Mammary epithelial cell (primary cell): ENCODE measurements at regions of chr3 and their contacts with region 1.

Region 1: DNA sequence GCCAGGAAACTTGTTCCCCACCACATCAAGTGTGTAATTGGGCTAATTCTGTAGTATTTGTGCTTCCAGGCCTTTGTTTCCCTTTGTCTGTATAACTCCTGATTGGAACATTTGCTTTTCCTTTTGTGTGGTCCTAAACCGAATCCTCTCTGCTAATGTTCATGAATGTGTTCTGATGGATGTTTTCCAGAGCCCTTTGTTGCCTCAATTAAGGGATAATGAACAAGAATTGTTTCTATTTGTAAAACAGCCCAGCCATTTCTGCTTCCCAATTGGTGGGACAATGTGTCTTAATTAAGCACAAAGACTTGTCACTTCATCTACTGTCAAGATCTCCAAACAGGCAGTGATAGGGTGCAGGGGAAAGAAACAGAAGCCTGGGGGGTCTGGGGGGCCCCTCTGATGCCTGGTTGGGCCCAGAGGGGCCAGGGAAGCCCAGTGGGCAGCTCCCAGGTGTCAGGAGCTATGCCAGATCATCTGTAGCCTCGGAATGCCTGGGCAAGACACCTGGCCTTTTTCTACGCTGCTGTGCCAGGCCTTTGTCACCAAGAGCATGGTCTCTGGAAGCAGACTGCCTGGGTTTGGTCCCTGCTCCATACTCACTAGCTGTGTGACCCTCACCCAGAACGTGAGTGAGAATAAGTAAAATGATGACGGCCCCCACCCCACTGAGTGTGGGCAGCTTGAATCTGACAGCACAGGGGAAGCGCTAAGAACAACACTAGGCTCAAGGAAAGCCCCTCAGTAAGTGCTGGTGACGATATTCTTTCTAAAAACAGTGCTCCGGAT is 116.6 kb upstream of the PRR20G start:
- DNase-seq: no peak
- H3K4me3 ChIP-seq: no peak overlapping the region
- H3K27ac ChIP-seq: no peak overlapping the region
- H3K4me1 ChIP-seq: no peaks in the 10 kb centered on the region
- H3K27me3 ChIP-seq: no peaks in the 10 kb centered on the region
- CTCF ChIP-seq: no peak

Region 2: GRCh38 chr3:127467391-127467790 is 63.0 kb after region 1 on chr3:
- CTCF ChIA-PET with region 1: no interaction called
- dilution Hi-C with region 1: loop called (anchors 5 kb)
- in situ Hi-C with region 1: no loop called
- intact Hi-C with region 1: no loop called
- DNase-seq: no peak
- H3K4me3 ChIP-seq: no peak overlapping the region
- H3K27ac ChIP-seq: no peak overlapping the region
- H3K4me1 ChIP-seq: peaks cover 6% of the 10 kb centered on the region
- H3K27me3 ChIP-seq: no peaks in the 10 kb centered on the region
- CTCF ChIP-seq: no peak